ENCODE measurements at regions of chr7 and their contacts with region 1.

Region 1: GRCh38 chr7:102236592-102237287 is 49.9 kb upstream of the SH2B2 start:
- DNase-seq: peak; percentile 2 to 60 (median 29)
- ATAC-seq: no peak
- H3K4me3 ChIP-seq: no peak overlapping the region
- H3K4me3 Mint-ChIP-seq: no peak overlapping the region
- H3K27ac ChIP-seq: no peak overlapping the region
- H3K27ac Mint-ChIP-seq: no peak overlapping the region
- H3K4me1 ChIP-seq: no peaks in the 10 kb centered on the region
- H3K4me1 Mint-ChIP-seq: no peaks in the 10 kb centered on the region
- H3K27me3 ChIP-seq: no peaks in the 10 kb centered on the region
- H3K27me3 Mint-ChIP-seq: no peaks in the 10 kb centered on the region
- CTCF ChIP-seq: peak; percentile 52

Region 2: DNA sequence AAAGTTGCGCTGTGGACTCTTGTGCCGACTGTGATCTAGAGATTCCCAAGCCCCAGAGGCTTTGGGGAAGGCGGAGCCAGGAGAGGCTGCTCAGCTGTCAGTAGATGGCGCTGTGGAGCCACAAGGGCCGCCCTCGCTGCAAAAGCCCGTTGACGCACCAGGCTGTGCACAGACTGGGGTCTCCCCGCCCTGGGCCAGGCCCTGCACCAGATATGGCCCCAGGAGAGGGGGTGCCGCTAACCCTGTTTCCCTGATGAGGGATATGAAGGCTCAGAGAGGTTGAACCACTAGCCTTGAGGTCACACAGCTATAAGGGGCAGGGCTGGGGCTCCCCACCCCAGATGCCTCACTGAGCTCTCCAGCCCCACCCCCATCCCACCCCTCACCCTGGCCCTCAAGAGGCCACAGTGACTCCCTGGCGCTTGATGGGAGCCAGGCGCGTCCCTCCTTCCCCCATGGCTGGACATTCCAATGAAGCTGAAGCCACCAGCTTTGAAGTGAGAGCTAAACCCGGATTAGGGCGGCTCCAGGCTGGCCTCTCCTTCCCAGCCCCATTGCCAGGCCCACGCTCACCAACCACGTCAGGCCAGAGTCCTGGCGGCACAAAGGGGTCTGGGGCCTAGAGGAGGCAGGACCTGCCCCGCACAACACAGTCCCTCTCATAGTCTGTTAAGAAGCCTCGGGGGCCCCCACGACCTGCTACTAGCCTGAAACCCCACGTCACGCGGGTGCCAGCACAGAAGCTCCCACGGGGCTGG is 634.1 kb before region 1 on chr7:
- CTCF ChIA-PET with region 1: no interaction called
- POLR2A ChIA-PET with region 1: no interaction called
- intact Hi-C with region 1: loop called (anchors 1 kb)
- DNase-seq: peak; percentile 48 to 81 (median 58)
- ATAC-seq: peak; percentile 69
- H3K4me3 ChIP-seq: no peak overlapping the region
- H3K4me3 Mint-ChIP-seq: no peak overlapping the region
- H3K27ac ChIP-seq: no peak overlapping the region
- H3K27ac Mint-ChIP-seq: no peak overlapping the region
- H3K4me1 ChIP-seq: peaks cover 5% of the 10 kb centered on the region
- H3K4me1 Mint-ChIP-seq: no peaks in the 10 kb centered on the region
- H3K27me3 ChIP-seq: no peaks in the 10 kb centered on the region
- H3K27me3 Mint-ChIP-seq: peaks cover 4% of the 10 kb centered on the region
- CTCF ChIP-seq: peak; percentile 75